K562 (cell line): ENCODE measurements at regions of chr19 and their contacts with region 1.

Region 1: GRCh38 chr19:17859533-17860330 is at the start of gene RPL18A:
- DNase-seq: peak; percentile 93 to 100 (median 94)
- ATAC-seq: peak; percentile 94
- H3K4me3 ChIP-seq: peak within 1 kb of the TSS; percentile 82
- H3K27ac ChIP-seq: peak within 1 kb of the TSS; percentile 91
- H3K4me1 ChIP-seq: peaks cover 7 to 34% of the 10 kb centered on the region in 2 experiments; a peak in 4 of 5 replicates
- H3K27me3 ChIP-seq: no peaks in the 10 kb centered on the region
- CTCF ChIP-seq: peak; percentile 91 to 98 (median 94)
- EP300 ChIP-seq: no peak; the same call in 1 of the 2 replicates
- POLR2A ChIP-seq: peak; percentile 99
- RAD21 ChIP-seq: peak; percentile 89
- polyA plus RNA-seq, gene RPL18A: 1,130 to 1,273 TPM

Region 2: GRCh38 chr19:17469481-17470067 is 390.2 kb before region 1 on chr19:
- CTCF ChIA-PET with region 1: no interaction called
- POLR2A ChIA-PET with region 1: no interaction called
- in situ Hi-C with region 1: no loop called
- intact Hi-C with region 1: loop called (anchors 5 kb)
- DNase-seq: peak; percentile 92 to 98 (median 94)
- ATAC-seq: peak; percentile 84
- H3K4me3 ChIP-seq: peak overlapping the region; percentile 76
- H3K27ac ChIP-seq: peak overlapping the region; percentile 73
- H3K4me1 ChIP-seq: peaks cover 30 to 43% of the 10 kb centered on the region in 2 experiments
- H3K27me3 ChIP-seq: no peaks in the 10 kb centered on the region; a peak in 1 of 5 replicates
- CTCF ChIP-seq: no peak
- EP300 ChIP-seq: no peak
- POLR2A ChIP-seq: 0 out of 2 replicates have a peak, but pooled peaks have one; percentile 31
- RAD21 ChIP-seq: no peak

Region 3: DNA sequence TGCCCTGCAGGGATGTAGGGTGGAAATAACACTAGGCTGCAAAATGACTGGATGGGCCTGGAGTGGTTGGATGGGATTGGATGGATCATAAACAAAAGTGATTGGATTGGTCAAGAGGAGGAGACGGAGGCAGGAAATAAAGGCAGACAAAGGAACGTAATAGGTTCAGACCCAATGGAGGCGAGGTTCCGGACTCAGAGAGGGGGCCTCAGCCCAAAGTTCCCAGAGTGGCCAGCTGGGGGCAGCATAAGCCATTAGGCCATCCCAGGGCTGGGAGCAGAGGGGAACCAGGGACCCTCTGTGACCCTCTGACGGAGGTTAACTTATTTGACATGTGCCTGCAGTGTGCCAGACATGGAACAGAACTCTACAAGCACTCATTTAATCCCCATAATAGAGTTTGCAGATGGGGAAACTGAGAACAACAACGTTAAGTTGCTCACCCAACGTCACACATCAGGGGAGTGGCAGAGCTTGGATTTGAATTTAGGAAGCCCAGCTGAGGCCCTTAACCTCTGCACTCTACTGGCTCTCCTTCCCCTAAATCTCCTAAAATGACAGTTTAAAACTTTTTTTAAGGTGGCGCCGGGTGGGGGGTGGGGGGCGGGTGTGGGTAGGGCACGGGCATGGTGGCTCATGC is 155.8 kb before region 1 on chr19:
- CTCF ChIA-PET with region 1: interaction called, 7 read pairs
- POLR2A ChIA-PET with region 1: interaction called, 6 read pairs
- in situ Hi-C with region 1: loop called (anchors 10 kb)
- intact Hi-C with region 1: loop called (anchors 1 kb)
- DNase-seq: peak; percentile 66 to 74 (median 68)
- ATAC-seq: peak; percentile 90
- H3K4me3 ChIP-seq: no peak overlapping the region
- H3K27ac ChIP-seq: no peak overlapping the region
- H3K4me1 ChIP-seq: peaks cover 0 to 4% of the 10 kb centered on the region in 2 experiments; a peak in 2 of 5 replicates
- H3K27me3 ChIP-seq: peaks cover 5 to 16% of the 10 kb centered on the region in 2 experiments
- CTCF ChIP-seq: peak; percentile 86 to 95 (median 87)
- EP300 ChIP-seq: no peak
- POLR2A ChIP-seq: no peak
- RAD21 ChIP-seq: peak; percentile 84 to 94

Region 4: GRCh38 chr19:17841810-17842662 is 17.7 kb before region 1 on chr19:
- CTCF ChIA-PET with region 1: no interaction called
- POLR2A ChIA-PET with region 1: interaction called, 22 read pairs
- in situ Hi-C with region 1: no loop called
- intact Hi-C with region 1: no loop called
- DNase-seq: peak; percentile 95 to 100 (median 99)
- ATAC-seq: peak; percentile 94
- H3K4me3 ChIP-seq: peak overlapping the region; percentile 58
- H3K27ac ChIP-seq: peak overlapping the region; percentile 77
- H3K4me1 ChIP-seq: peaks cover 0 to 37% of the 10 kb centered on the region in 2 experiments; a peak in 3 of 5 replicates
- H3K27me3 ChIP-seq: peaks cover 3 to 15% of the 10 kb centered on the region in 2 experiments; a peak in 2 of 5 replicates
- CTCF ChIP-seq: no peak
- EP300 ChIP-seq: no peak
- POLR2A ChIP-seq: peak; percentile 85
- RAD21 ChIP-seq: no peak

Region 5: GRCh38 chr19:17873786-17874757 is 14.3 kb after region 1 on chr19:
- CTCF ChIA-PET with region 1: no interaction called
- POLR2A ChIA-PET with region 1: interaction called, 24 read pairs
- in situ Hi-C with region 1: no loop called
- intact Hi-C with region 1: no loop called
- DNase-seq: peak; percentile 87 to 98 (median 96)
- ATAC-seq: peak; percentile 96
- H3K4me3 ChIP-seq: peak overlapping the region; percentile 43
- H3K27ac ChIP-seq: no peak overlapping the region
- H3K4me1 ChIP-seq: peaks cover 0 to 42% of the 10 kb centered on the region in 2 experiments; a peak in 3 of 5 replicates
- H3K27me3 ChIP-seq: peaks cover 9 to 17% of the 10 kb centered on the region in 2 experiments; a peak in 3 of 5 replicates
- CTCF ChIP-seq: no peak
- EP300 ChIP-seq: no peak
- POLR2A ChIP-seq: no peak
- RAD21 ChIP-seq: no peak

Region 6: GRCh38 chr19:18058208-18059030 is 198.7 kb after region 1 on chr19:
- CTCF ChIA-PET with region 1: no interaction called
- POLR2A ChIA-PET with region 1: no interaction called
- in situ Hi-C with region 1: no loop called
- intact Hi-C with region 1: loop called (anchors 10 kb)
- DNase-seq: peak; percentile 85 to 88 (median 86)
- ATAC-seq: peak; percentile 95
- H3K4me3 ChIP-seq: peak overlapping the region; percentile 22
- H3K27ac ChIP-seq: peak overlapping the region; percentile 67; the same call in 2 of the 3 replicates
- H3K4me1 ChIP-seq: peaks cover 3 to 13% of the 10 kb centered on the region in 2 experiments; a peak in 4 of 5 replicates
- H3K27me3 ChIP-seq: no peaks in the 10 kb centered on the region
- CTCF ChIP-seq: peak; percentile 84 to 92 (median 85)
- EP300 ChIP-seq: no peak
- POLR2A ChIP-seq: no peak
- RAD21 ChIP-seq: peak; percentile 96 to 97

Region 7: GRCh38 chr19:18203863-18204393 is 344.2 kb after region 1 on chr19 and contains the start of gene RAB3A:
- CTCF ChIA-PET with region 1: no interaction called
- POLR2A ChIA-PET with region 1: no interaction called
- in situ Hi-C with region 1: no loop called
- intact Hi-C with region 1: no loop called
- DNase-seq: peak; percentile 96 to 100 (median 98)
- ATAC-seq: peak; percentile 96
- H3K4me3 ChIP-seq: peak within 1 kb of the TSS; percentile 68
- H3K27ac ChIP-seq: peak within 1 kb of the TSS; percentile 86
- H3K4me1 ChIP-seq: peaks cover 14 to 45% of the 10 kb centered on the region in 2 experiments; a peak in 4 of 5 replicates
- H3K27me3 ChIP-seq: no peaks in the 10 kb centered on the region
- CTCF ChIP-seq: 0 out of 6 replicates have a peak, but pooled peaks of 1 of the 3 experiments have one; percentile 2
- EP300 ChIP-seq: no peak
- POLR2A ChIP-seq: no peak
- RAD21 ChIP-seq: no peak
- polyA plus RNA-seq, gene RAB3A: 0.17 TPM in 1 of 2 experiments, not detected in the other